Kidney (tissue), 22 donors: ENCODE measurements at regions of chr3 and their contacts with region 1.

Region 1: GRCh38 chr3:77254967-77255831 is 215.3 kb downstream of the ROBO2 start:
- DNase-seq: peak in 3 of 5 donors; percentile 50 to 82 (median 76)
- H3K4me3 ChIP-seq: no peak overlapping the region
- H3K27ac ChIP-seq: no peak overlapping the region
- H3K4me1 ChIP-seq: no peaks in the 10 kb centered on the region
- H3K27me3 ChIP-seq: no peaks in the 10 kb centered on the region
- CTCF ChIP-seq: peak; percentile 67

Region 2: GRCh38 chr3:77038468-77038929 is 216.7 kb before region 1 on chr3:
- intact Hi-C with region 1: loop called (anchors 10 kb)
- DNase-seq: peak; percentile 80 to 97 (median 91)
- H3K4me3 ChIP-seq: peak overlapping the region; percentile 48 to 89 (median 61)
- H3K27ac ChIP-seq: no peak overlapping the region
- H3K4me1 ChIP-seq: peaks cover 0 to 3% (median 0%) of the 10 kb centered on the region in 3 donors
- H3K27me3 ChIP-seq: no peaks in the 10 kb centered on the region
- CTCF ChIP-seq: peak; percentile 55

Region 3: GRCh38 chr3:77726517-77726916 is 471.3 kb after region 1 on chr3:
- intact Hi-C with region 1: no loop called
- DNase-seq: peak in 1 of 5 donors; percentile 22
- H3K4me3 ChIP-seq: no peak overlapping the region
- H3K27ac ChIP-seq: no peak overlapping the region
- H3K4me1 ChIP-seq: no peaks in the 10 kb centered on the region
- H3K27me3 ChIP-seq: no peaks in the 10 kb centered on the region
- CTCF ChIP-seq: no peak